ENCODE measurements at regions of chr1 and their contacts with region 1.

Region 1: GRCh38 chr1:118151312-118151937 is 33.6 kb downstream of the SPAG17 start:
- DNase-seq: peak in 1 of 2 donors; percentile 23
- ATAC-seq: no peak
- H3K4me3 ChIP-seq: no peak overlapping the region
- H3K27ac ChIP-seq: no peak overlapping the region
- H3K4me1 ChIP-seq: no peaks in the 10 kb centered on the region
- H3K27me3 ChIP-seq: peaks cover 0 to 4% (median 0%) of the 10 kb centered on the region in 7 donors
- CTCF ChIP-seq: peak in 8 of 9 donors; percentile 41 to 75 (median 65)

Region 2: GRCh38 chr1:117959364-117959763 is 192.1 kb before region 1 on chr1:
- intact Hi-C with region 1: no loop called
- DNase-seq: no peak
- ATAC-seq: no peak
- H3K4me3 ChIP-seq: no peak overlapping the region
- H3K27ac ChIP-seq: no peak overlapping the region
- H3K4me1 ChIP-seq: no peaks in the 10 kb centered on the region
- H3K27me3 ChIP-seq: no peaks in the 10 kb centered on the region
- CTCF ChIP-seq: no peak

Region 3: GRCh38 chr1:118294875-118295642 is 143.6 kb after region 1 on chr1:
- intact Hi-C with region 1: no loop called
- DNase-seq: no peak
- ATAC-seq: peak in 1 of 8 donors; percentile 14
- H3K4me3 ChIP-seq: no peak overlapping the region
- H3K27ac ChIP-seq: no peak overlapping the region
- H3K4me1 ChIP-seq: peaks cover 0 to 14% (median 0%) of the 10 kb centered on the region in 9 donors
- H3K27me3 ChIP-seq: no peaks in the 10 kb centered on the region
- CTCF ChIP-seq: no peak

Region 4: GRCh38 chr1:118791094-118791691 is 639.8 kb after region 1 on chr1:
- intact Hi-C with region 1: loop called in 1 of 10 experiments (anchors 5 kb)
- DNase-seq: no peak
- ATAC-seq: no peak
- H3K4me3 ChIP-seq: no peak overlapping the region
- H3K27ac ChIP-seq: no peak overlapping the region
- H3K4me1 ChIP-seq: no peaks in the 10 kb centered on the region
- H3K27me3 ChIP-seq: no peaks in the 10 kb centered on the region
- CTCF ChIP-seq: no peak

Region 5: GRCh38 chr1:119008483-119009311 is 857.3 kb after region 1 on chr1:
- intact Hi-C with region 1: loop called in 8 of 10 experiments (anchors 2 to 10 kb)
- DNase-seq: peak in 1 of 2 donors; percentile 36
- ATAC-seq: peak in 7 of 8 donors; percentile 53 to 85 (median 72)
- H3K4me3 ChIP-seq: peak overlapping the region; percentile 7 to 39 (median 32)
- H3K27ac ChIP-seq: no peak overlapping the region
- H3K4me1 ChIP-seq: peaks cover 10 to 32% (median 19%) of the 10 kb centered on the region in 9 donors
- H3K27me3 ChIP-seq: peaks cover 23 to 77% (median 63%) of the 10 kb centered on the region in 7 donors
- CTCF ChIP-seq: peak; percentile 26 to 74 (median 65)

Region 6: DNA sequence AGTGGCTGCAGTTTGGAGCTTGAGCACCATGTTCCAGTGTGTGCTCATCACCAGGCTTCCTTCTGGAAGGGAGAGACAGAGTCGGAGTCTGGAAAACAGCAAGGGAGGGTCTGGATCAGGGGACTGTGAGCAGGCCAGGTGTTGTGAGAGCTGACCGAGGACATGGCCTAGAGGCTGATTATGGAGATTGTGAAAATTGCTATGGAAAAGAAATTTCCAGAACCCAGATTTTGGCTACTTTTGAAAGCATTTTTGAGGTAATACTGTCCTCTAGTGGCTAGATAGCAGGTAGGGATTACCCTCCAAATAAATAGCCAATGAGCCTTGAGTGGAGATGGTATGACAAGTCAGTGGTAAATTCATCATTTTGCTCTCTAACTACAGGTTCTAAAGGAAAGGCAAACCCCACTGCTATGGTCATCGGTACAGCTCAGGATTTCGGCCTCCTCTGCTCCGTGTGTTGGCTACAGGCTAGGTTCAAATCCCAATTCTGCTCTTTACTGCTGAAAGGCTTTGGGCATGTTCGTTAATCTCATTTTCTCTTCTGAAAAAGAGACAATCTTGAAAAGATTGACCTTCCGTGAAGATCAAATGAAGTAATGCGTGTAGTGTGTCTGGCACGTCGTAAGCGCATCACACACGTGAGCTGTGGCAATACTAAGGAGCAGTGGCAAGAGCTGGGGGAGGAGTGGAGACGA is 1216.2 kb after region 1 on chr1:
- intact Hi-C with region 1: loop called in 2 of 10 experiments (anchors 5 to 10 kb)
- DNase-seq: no peak
- ATAC-seq: peak in 2 of 8 donors; percentile 28 to 51
- H3K4me3 ChIP-seq: no peak overlapping the region
- H3K27ac ChIP-seq: no peak overlapping the region
- H3K4me1 ChIP-seq: no peaks in the 10 kb centered on the region
- H3K27me3 ChIP-seq: peaks cover 0 to 7% (median 0%) of the 10 kb centered on the region in 7 donors
- CTCF ChIP-seq: peak; percentile 60 to 82 (median 75)

Measured in heart right ventricle (tissue), 16 donors.